OCI-LY7 (cell line): ENCODE measurements at regions of chr14 and their contacts with region 1.

Region 1: DNA sequence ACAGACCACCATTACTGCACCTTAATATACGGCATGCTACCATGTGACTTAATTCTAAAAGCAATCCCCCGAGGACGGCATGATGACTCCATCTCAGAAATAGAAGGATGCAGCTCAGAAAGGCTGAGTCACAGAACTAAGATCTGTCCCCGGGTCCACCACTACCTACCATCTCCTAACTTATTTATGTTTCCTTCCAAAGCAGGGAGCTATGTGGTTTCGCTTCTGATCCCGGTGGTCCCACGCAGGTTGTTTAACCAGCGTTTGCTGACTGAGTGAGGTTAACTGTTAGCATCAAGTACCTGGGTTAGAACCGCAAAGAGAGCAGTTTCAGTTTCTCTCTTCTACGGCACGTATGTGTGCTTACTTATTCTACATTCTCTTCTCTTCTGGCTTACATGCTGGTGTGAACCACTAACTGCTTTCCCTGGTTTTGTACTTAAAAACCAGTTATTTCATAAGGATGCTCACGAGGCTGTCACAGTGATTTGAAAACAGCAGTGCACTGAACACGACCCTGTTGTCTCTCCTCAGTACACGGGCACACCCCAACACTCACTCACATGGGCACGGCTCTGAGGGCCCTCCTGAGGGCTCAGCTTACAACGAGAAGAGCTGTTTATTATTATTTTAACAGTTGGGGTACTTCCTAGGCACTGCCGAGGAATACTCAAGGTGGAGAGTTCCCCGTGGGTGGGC is 66.7 kb downstream of the CCDC88C start:
- DNase-seq: peak; percentile 72
- H3K4me3 ChIP-seq: peak overlapping the region; percentile 60
- H3K27ac ChIP-seq: peak overlapping the region; percentile 94
- H3K4me1 ChIP-seq: peaks cover 97% of the 10 kb centered on the region
- CTCF ChIP-seq: no peak

Region 2: GRCh38 chr14:91323671-91324605 is 27.0 kb before region 1 on chr14:
- CTCF ChIA-PET with region 1: interaction called, 6 read pairs
- POLR2A ChIA-PET with region 1: interaction called, 13 read pairs
- intact Hi-C with region 1: loop called (anchors 1 kb)
- DNase-seq: peak; percentile 88
- H3K4me3 ChIP-seq: peak overlapping the region; percentile 53
- H3K27ac ChIP-seq: peak overlapping the region; percentile 92
- H3K4me1 ChIP-seq: peaks cover 58% of the 10 kb centered on the region
- CTCF ChIP-seq: peak; percentile 100

Region 3: GRCh38 chr14:91361233-91362063 is 10.5 kb after region 1 on chr14:
- CTCF ChIA-PET with region 1: interaction called, 6 read pairs
- POLR2A ChIA-PET with region 1: interaction called, 311 read pairs
- intact Hi-C with region 1: loop called (anchors 1 kb)
- DNase-seq: no peak
- H3K4me3 ChIP-seq: peak overlapping the region; percentile 15
- H3K27ac ChIP-seq: peak overlapping the region; percentile 94
- H3K4me1 ChIP-seq: peaks cover 100% of the 10 kb centered on the region
- CTCF ChIP-seq: no peak

Region 4: DNA sequence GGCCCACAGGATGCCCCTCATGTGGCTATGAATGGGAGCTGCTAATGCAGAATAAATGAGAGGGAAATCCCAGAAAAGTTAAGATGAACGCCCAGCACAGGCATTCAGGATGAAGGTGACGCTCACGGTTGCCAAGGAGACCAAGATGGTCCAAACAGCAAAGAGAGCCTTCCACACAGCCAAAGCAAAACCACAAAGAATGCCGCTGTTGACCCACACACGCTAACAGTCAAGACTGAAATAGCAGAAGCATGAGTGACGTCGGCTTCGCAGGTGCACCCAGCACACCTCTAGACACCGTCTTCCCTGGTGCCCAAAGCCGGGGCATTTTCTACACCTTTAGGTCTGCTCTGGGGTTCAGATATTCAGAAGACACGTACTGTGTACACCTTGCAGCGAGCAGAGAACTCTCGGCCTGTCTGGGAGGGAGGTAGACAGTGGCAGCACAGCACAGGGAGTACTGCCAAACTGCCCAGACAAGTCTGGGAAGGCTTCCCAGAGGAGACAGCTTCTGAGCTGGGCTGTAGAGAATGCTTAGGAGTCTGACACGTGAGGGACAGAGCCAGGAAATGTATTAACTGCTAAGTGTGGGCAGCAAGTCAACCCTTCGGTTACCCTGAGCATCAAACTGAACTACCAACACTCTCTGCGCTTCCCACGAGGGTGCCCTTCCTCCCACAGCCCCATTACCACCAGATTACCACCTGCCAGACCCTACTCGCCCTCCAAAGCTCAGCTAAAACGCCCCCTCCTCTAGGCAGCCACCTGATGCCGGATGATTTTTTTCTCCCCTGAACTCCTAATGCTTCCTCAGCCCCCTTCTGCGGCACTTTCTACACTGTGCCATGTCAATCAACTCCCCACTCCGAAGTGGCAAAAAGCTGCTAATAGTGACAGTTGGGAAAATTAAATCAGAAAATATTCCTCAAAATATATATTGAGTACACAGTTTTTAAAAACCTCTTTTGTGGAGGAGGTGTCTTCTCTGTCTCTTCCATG is 16.5 kb after region 1 on chr14:
- CTCF ChIA-PET with region 1: interaction called, 16 read pairs
- POLR2A ChIA-PET with region 1: interaction called, 311 read pairs
- intact Hi-C with region 1: loop called (anchors 1 kb)
- DNase-seq: peak; percentile 94
- H3K4me3 ChIP-seq: peak overlapping the region; percentile 53
- H3K27ac ChIP-seq: peak overlapping the region; percentile 94
- H3K4me1 ChIP-seq: peaks cover 100% of the 10 kb centered on the region
- CTCF ChIP-seq: no peak

Region 5: DNA sequence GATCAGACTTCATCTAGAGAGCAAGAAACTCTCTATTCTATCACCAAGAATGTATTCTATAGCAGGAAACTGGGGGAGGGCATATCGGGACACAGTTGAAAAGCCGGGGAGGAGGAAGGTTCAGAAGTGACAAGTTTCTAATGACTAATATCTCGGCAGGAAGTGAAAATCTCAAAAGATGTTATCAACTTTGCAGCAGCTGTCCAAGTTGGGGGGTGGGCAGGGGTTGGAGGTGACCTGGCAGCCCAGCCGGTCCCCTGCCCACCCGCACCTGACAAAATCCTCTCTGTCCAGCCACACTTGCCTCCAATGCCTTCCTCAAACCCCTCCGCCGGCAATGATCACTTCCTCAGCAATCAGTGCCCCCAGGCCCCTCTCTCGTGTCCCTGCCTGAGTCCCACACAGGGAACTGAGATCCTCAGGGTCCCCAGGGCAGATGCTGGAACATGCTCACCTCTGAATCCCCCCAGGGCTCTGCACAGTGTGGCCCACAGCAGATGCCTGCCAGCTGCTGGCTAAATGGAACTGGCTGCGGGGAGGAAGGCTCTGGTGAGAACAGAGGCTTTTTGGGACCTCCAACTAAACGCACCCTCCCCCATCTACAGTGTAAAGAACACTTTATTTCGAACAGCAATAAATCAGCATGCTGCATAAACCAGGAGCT is 22.8 kb after region 1 on chr14:
- CTCF ChIA-PET with region 1: interaction called, 16 read pairs
- POLR2A ChIA-PET with region 1: interaction called, 311 read pairs
- intact Hi-C with region 1: loop called (anchors 1 kb)
- DNase-seq: peak; percentile 74
- H3K4me3 ChIP-seq: peak overlapping the region; percentile 60
- H3K27ac ChIP-seq: peak overlapping the region; percentile 94
- H3K4me1 ChIP-seq: peaks cover 100% of the 10 kb centered on the region
- CTCF ChIP-seq: no peak

Region 6: GRCh38 chr14:91388551-91388975 is 37.6 kb after region 1 on chr14:
- CTCF ChIA-PET with region 1: interaction called, 3 read pairs
- POLR2A ChIA-PET with region 1: interaction called, 15 read pairs
- intact Hi-C with region 1: no loop called
- DNase-seq: no peak
- H3K4me3 ChIP-seq: no peak overlapping the region
- H3K27ac ChIP-seq: peak overlapping the region; percentile 49
- H3K4me1 ChIP-seq: peaks cover 96% of the 10 kb centered on the region
- CTCF ChIP-seq: no peak

Region 7: DNA sequence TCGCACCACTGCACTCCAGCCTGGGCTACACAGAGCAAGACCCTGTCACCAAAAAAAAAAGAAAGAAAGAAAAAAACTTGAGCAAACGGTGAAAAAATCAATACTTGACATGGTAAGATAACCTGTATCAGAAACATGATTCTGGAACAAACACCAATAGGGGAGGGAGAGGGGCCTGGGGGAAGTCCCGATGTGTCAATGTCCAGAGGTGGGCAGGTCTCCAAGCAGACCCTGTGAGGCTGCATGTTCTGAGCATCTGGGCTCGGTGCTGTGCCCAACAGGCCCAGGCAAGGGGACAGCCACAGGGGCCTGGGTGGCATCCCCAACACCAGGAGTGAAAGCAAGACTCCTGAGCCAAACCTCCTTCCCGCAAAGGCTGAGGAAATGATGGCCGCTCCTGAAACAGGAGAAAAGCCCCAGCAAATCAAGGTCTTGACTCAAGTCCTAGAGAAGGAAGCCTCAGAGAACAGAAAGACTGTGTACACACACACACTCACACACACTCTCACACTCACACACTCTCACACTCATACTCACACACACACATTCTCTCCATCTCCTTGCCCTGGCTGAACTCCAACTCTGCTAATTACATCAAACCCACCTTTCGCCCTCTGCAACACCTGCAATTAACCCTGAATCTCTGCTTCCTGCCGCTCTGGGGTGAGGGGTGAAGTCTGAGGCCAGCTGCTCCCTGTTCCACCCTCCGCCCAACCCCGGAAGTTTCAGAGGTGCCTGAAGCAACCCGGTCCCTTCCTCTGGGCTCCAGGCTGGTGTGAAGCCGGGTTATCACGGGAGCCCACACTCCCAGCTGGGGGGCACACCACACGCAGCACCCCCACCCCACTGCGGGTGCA is 46.2 kb after region 1 on chr14:
- CTCF ChIA-PET with region 1: interaction called, 5 read pairs
- POLR2A ChIA-PET with region 1: interaction called, 28 read pairs
- intact Hi-C with region 1: no loop called
- DNase-seq: peak; percentile 87
- H3K4me3 ChIP-seq: peak overlapping the region; percentile 63
- H3K27ac ChIP-seq: peak overlapping the region; percentile 89
- H3K4me1 ChIP-seq: peaks cover 94% of the 10 kb centered on the region
- CTCF ChIP-seq: no peak